Activated CD8-positive, alpha-beta T cell treated with anti-CD3 and anti-CD28 coated beads for 36 hours (primary cell): ENCODE measurements at regions of chr9 and their contacts with region 1.

Region 1: GRCh38 chr9:136686794-136687711 is at the start of gene AGPAT2:
- DNase-seq: peak; percentile 79
- ATAC-seq: peak; percentile 94
- H3K4me3 Mint-ChIP-seq: peak within 1 kb of the TSS; percentile 76
- H3K27ac Mint-ChIP-seq: peak within 1 kb of the TSS; percentile 38
- H3K4me1 Mint-ChIP-seq: peaks cover 3% of the 10 kb centered on the region
- H3K27me3 Mint-ChIP-seq: no peaks in the 10 kb centered on the region
- CTCF ChIP-seq: no peak
- total RNA-seq, gene AGPAT2: 11.3 to 11.8 TPM

Region 2: GRCh38 chr9:136700959-136701667 is 14.1 kb after region 1 on chr9:
- CTCF ChIA-PET with region 1: no interaction called
- POLR2A ChIA-PET with region 1: interaction called, 10 read pairs
- intact Hi-C with region 1: no loop called
- DNase-seq: peak; percentile 93
- ATAC-seq: peak; percentile 93
- H3K4me3 Mint-ChIP-seq: peak overlapping the region; percentile 76
- H3K27ac Mint-ChIP-seq: peak overlapping the region; percentile 97
- H3K4me1 Mint-ChIP-seq: peaks cover 26% of the 10 kb centered on the region
- H3K27me3 Mint-ChIP-seq: peaks cover 19% of the 10 kb centered on the region
- CTCF ChIP-seq: no peak